ENCODE measurements at regions of chr7 and their contacts with region 1.

Region 1: GRCh38 chr7:25515633-25516275 is 287.5 kb upstream of the NPVF start:
- DNase-seq: no peak
- H3K4me3 ChIP-seq: no peak overlapping the region
- H3K27ac ChIP-seq: no peak overlapping the region
- H3K4me1 ChIP-seq: peaks cover 0 to 5% of the 10 kb centered on the region in 2 donors
- H3K27me3 ChIP-seq: no peaks in the 10 kb centered on the region
- CTCF ChIP-seq: no peak
- POLR2A ChIP-seq: no peak

Region 2: GRCh38 chr7:25496476-25497368 is 19.0 kb before region 1 on chr7:
- intact Hi-C with region 1: loop called (anchors 2 kb)
- DNase-seq: no peak
- H3K4me3 ChIP-seq: no peak overlapping the region
- H3K27ac ChIP-seq: peak overlapping the region in 1 of 3 donors; percentile 9
- H3K4me1 ChIP-seq: no peaks in the 10 kb centered on the region
- H3K27me3 ChIP-seq: no peaks in the 10 kb centered on the region
- CTCF ChIP-seq: no peak
- POLR2A ChIP-seq: no peak

Region 3: GRCh38 chr7:25597946-25598345 is 82.2 kb after region 1 on chr7:
- intact Hi-C with region 1: no loop called
- DNase-seq: no peak
- H3K4me3 ChIP-seq: no peak overlapping the region
- H3K27ac ChIP-seq: no peak overlapping the region
- H3K4me1 ChIP-seq: no peaks in the 10 kb centered on the region
- H3K27me3 ChIP-seq: no peaks in the 10 kb centered on the region
- CTCF ChIP-seq: no peak
- POLR2A ChIP-seq: no peak

Measured in thyroid gland (tissue), 4 donors.